Activated T-helper 2 cell treated with anti-CD3 and anti-CD28 coated beads, Interferon-gamma antibody, Interleukin-2, Interleukin-4, amounts not matched to agents 10 μg/mL and 5 μg/mL and 100 μg/mL, durations not matched to agents 14 hours and 24 hours and 36 hours (primary cell): ENCODE measurements at regions of chr12 and their contacts with region 1.

Region 1: GRCh38 chr12:6825398-6826124 is 2.6 kb upstream of the P3H3 start:
- DNase-seq: peak; percentile 71
- H3K4me3 Mint-ChIP-seq: no peak overlapping the region
- H3K27ac Mint-ChIP-seq: no peak overlapping the region
- H3K4me1 Mint-ChIP-seq: peaks cover 32% of the 10 kb centered on the region
- H3K27me3 Mint-ChIP-seq: peaks cover 43% of the 10 kb centered on the region

Region 2: DNA sequence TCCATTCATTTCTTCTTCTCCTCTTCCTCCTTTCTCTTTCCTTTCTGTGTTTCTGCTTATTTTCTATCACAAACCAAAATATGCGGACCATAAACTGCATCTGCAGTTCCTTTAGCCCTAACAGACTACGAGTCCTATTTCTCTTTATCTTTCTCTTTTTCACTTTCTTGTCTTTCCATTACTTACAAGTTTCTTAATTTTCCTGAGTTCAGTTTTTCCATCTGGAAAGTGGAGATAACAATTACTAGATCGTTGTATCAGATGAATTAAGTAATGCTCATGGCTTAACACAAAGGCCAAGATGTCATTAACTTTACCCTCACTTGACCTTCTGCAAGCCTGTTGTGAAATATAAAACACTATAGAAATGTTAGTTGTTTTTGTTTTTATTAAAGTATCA is 102.7 kb before region 1 on chr12:
- intact Hi-C with region 1: no loop called
- DNase-seq: no peak
- H3K4me3 Mint-ChIP-seq: no peak overlapping the region
- H3K27ac Mint-ChIP-seq: no peak overlapping the region
- H3K4me1 Mint-ChIP-seq: peaks cover 17% of the 10 kb centered on the region
- H3K27me3 Mint-ChIP-seq: no peaks in the 10 kb centered on the region

Region 3: GRCh38 chr12:6735448-6736191 is 89.9 kb before region 1 on chr12:
- intact Hi-C with region 1: loop called (anchors 1 kb)
- DNase-seq: peak; percentile 24
- H3K4me3 Mint-ChIP-seq: no peak overlapping the region
- H3K27ac Mint-ChIP-seq: no peak overlapping the region
- H3K4me1 Mint-ChIP-seq: peaks cover 7% of the 10 kb centered on the region
- H3K27me3 Mint-ChIP-seq: no peaks in the 10 kb centered on the region

Region 4: DNA sequence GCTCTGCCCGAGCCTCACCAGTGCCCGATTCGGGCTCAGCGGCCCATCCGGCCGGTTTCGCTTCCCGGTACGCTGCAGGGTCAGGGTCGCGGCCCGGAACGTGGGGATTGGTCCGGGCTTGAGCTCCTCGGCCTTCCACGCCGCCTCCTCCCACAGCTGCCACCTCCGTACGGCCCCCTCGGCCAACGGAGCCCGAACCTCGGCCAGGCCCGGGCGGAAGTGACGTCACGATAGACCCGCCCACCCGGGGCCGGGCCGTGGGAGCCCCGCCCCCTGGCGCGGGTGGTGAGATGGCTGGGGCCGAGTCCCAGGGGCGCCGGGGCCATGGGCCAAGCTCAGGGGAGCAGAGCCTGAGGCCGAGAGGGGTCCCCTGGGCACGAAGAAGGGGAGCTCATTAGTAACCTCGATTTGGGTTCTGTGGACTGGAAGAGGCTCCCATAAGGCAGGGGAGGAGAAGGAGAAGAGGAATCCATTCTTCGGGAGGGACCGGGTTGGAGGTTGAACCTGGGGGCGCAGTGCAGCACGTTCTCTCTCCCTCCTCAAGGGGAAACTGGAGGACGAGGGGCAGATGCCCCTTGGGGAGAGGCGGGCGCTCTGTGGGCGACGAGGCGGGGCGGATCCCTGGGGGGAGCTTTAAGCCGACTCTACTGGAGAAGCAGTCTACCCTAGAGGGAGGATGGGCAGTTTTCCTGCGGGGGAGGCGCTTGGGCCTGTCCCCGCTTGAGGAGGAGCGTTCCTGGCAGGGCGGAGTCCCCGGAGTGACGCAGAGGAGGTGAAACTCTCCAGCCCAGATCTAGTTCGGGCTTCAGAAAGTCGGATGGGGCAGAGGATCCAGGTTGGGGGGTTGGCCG is 72.4 kb before region 1 on chr12 and contains the start of gene MLF2:
- intact Hi-C with region 1: loop called (anchors 1 kb)
- DNase-seq: peak; percentile 97
- H3K4me3 Mint-ChIP-seq: peak within 1 kb of the TSS; percentile 94
- H3K27ac Mint-ChIP-seq: peak within 1 kb of the TSS; percentile 96
- H3K4me1 Mint-ChIP-seq: peaks cover 32% of the 10 kb centered on the region
- H3K27me3 Mint-ChIP-seq: no peaks in the 10 kb centered on the region
- total RNA-seq, gene MLF2: 162 and 172 TPM in 2 replicates

Region 5: DNA sequence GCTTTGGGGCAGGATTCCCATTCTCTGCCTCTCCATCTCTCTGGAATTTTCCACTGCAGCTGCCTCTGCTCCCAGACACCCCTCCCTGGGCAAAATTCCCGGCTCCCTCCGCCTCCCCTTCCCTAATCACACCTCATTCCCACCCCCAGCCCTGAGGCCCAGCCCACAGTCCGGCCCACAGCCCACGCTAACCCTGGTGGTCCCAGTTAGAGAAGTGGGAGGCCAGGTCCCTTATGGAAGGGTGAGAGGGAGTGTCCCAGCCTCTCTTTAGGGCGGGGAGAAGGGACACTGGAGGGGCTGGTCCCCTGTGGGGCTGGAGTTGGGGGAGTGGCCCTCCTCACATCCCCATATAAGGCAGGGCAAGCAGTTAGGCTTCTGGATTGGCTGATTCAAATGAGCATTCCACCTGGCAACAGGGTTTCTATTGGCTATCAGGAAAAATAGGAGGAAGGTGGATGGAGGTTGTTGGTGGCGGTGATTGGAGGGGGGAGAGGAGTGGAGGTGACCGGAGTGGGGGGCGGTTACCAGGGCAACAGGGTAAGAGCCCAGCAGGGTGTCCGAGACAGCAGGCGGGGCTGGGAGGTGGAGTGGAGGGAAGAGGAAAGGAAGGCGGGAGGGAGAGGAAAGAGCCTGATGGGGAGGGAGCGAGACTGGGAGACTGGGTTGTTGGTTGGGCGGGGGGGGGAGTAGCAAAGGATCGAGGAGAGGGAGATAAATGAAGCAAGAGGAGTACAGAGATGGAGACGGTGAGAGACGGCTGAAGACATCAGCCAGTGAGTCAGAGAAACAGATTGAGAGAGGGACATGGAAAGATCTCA is 61.3 kb before region 1 on chr12:
- intact Hi-C with region 1: loop called (anchors 5 kb)
- DNase-seq: peak; percentile 67
- H3K4me3 Mint-ChIP-seq: peak overlapping the region; percentile 67
- H3K27ac Mint-ChIP-seq: peak overlapping the region; percentile 30
- H3K4me1 Mint-ChIP-seq: peaks cover 34% of the 10 kb centered on the region
- H3K27me3 Mint-ChIP-seq: peaks cover 11% of the 10 kb centered on the region